ENCODE measurements at regions of chr10 and their contacts with region 1.

Region 1: GRCh38 chr10:95601116-95601719 is 40.0 kb upstream of the SORBS1 start:
- DNase-seq: peak; percentile 90
- ATAC-seq: peak; percentile 97
- H3K4me3 ChIP-seq: no peak overlapping the region
- H3K27ac ChIP-seq: no peak overlapping the region
- H3K4me1 ChIP-seq: no peaks in the 10 kb centered on the region
- H3K27me3 ChIP-seq: no peaks in the 10 kb centered on the region
- CTCF ChIP-seq: peak; percentile 96 to 99 (median 98)
- POLR2A ChIP-seq: no peak
- RAD21 ChIP-seq: peak; percentile 99

Region 2: GRCh38 chr10:95133016-95133752 is 468.0 kb before region 1 on chr10:
- CTCF ChIA-PET with region 1: no interaction called
- POLR2A ChIA-PET with region 1: no interaction called
- RAD21 ChIA-PET with region 1: no interaction called
- intact Hi-C with region 1: loop called (anchors 1 kb)
- DNase-seq: peak; percentile 82
- ATAC-seq: peak; percentile 96
- H3K4me3 ChIP-seq: no peak overlapping the region
- H3K27ac ChIP-seq: no peak overlapping the region
- H3K4me1 ChIP-seq: no peaks in the 10 kb centered on the region
- H3K27me3 ChIP-seq: no peaks in the 10 kb centered on the region
- CTCF ChIP-seq: peak; percentile 68 to 88 (median 77)
- POLR2A ChIP-seq: no peak
- RAD21 ChIP-seq: peak; percentile 87

Region 3: GRCh38 chr10:95430231-95430951 is 170.8 kb before region 1 on chr10:
- CTCF ChIA-PET with region 1: interaction called, 45 read pairs
- POLR2A ChIA-PET with region 1: no interaction called
- RAD21 ChIA-PET with region 1: interaction called, 3 to 6 read pairs
- intact Hi-C with region 1: loop called (anchors 1 kb)
- DNase-seq: peak; percentile 23
- ATAC-seq: peak; percentile 97
- H3K4me3 ChIP-seq: peak overlapping the region in 1 of 2 experiments; percentile 24; a peak in 1 of 4 replicates
- H3K27ac ChIP-seq: no peak overlapping the region
- H3K4me1 ChIP-seq: peaks cover 0 to 5% of the 10 kb centered on the region in 2 experiments; a peak in 1 of 4 replicates
- H3K27me3 ChIP-seq: no peaks in the 10 kb centered on the region
- CTCF ChIP-seq: peak; percentile 94 to 96 (median 94)
- POLR2A ChIP-seq: no peak
- RAD21 ChIP-seq: peak; percentile 96